ENCODE measurements at regions of chr14 and their contacts with region 1.

Region 1: DNA sequence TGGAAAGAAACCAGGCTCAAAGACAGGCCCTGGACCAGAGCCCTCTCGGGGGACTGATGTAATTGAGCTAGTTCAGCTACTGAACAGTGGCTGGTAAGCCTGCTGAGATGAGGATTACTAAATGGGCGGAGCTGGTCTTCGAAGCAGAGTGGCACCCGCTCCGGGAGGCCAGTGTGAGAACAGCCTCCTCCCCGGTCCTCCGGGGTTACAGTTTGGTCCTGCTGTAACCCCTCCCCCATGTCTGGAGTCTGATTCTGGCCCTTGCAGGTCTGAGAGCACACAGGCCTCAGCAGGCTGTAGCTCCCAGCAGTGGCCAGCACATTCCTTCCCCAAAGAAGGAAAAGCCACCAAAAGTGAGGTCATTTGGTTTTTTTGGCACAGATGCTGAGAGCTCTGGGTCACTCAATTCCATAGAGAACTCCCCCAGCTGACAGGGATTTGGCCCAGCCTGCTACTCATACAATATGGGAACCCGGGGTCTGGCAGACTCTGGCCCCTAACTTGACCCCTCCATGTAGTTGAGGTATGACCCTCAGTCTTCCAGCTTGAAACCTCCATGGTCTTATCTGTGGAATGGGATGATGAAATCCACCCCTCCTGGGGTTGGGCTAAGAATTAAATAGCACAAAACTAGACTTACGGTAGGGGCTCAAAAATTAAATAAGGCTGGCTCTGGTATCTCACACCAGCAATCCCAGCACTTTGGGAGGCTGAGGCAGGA is 39.0 kb downstream of the ACTN1 start:
- DNase-seq: peak; percentile 82 to 98
- ATAC-seq: peak; percentile 69 to 78
- H3K4me3 ChIP-seq: no peak overlapping the region
- H3K27ac ChIP-seq: peak overlapping the region; percentile 98 to 99
- H3K4me1 ChIP-seq: peaks cover 95% of the 10 kb centered on the region
- CTCF ChIP-seq: no peak
- EP300 ChIP-seq: peak; percentile 61 to 84; a peak in 3 of 5 replicates
- POLR2A ChIP-seq: no peak
- RAD21 ChIP-seq: peak; percentile 19 to 48; a peak in 4 of 5 replicates

Region 2: DNA sequence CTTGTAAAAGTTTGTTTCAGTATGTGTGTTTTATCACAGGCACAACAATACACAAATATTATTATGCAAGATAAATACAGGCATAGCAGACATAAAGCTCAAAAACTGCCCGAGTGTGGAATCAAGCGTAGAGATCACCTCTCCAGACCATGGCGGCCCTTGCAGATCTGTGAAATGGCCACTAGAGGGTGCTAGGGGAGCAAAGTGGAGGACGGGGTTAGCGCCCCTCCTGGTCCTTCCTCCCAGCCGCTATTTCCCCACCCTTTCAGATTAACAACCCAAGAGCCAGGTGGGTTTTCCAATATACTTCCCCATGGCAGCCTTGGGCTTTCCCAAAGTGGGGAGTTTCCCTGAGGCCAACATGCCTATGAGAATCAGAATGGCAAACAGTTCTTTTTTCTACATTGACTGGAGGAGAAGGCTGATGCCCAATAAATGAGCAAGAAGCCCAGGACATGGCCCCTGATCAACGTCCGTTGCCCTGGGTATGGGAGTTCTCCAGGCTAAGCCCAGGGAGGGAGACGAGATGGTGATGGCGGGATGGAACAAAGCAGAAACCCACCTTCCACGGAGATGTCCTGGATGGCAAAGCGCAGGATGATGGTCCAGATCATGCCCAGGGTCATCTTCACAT is 28.3 kb before region 1 on chr14:
- CTCF ChIA-PET with region 1: interaction called, 480 read pairs
- POLR2A ChIA-PET with region 1: no interaction called
- DNase-seq: peak; percentile 78 to 92
- ATAC-seq: peak; percentile 89 to 95
- H3K4me3 ChIP-seq: no peak overlapping the region
- H3K27ac ChIP-seq: peak overlapping the region; percentile 42 to 55; a peak in 4 of 6 replicates
- H3K4me1 ChIP-seq: peaks cover 31% of the 10 kb centered on the region
- CTCF ChIP-seq: peak; percentile 99
- EP300 ChIP-seq: no peak
- POLR2A ChIP-seq: no peak
- RAD21 ChIP-seq: peak; percentile 97 to 98

Region 3: DNA sequence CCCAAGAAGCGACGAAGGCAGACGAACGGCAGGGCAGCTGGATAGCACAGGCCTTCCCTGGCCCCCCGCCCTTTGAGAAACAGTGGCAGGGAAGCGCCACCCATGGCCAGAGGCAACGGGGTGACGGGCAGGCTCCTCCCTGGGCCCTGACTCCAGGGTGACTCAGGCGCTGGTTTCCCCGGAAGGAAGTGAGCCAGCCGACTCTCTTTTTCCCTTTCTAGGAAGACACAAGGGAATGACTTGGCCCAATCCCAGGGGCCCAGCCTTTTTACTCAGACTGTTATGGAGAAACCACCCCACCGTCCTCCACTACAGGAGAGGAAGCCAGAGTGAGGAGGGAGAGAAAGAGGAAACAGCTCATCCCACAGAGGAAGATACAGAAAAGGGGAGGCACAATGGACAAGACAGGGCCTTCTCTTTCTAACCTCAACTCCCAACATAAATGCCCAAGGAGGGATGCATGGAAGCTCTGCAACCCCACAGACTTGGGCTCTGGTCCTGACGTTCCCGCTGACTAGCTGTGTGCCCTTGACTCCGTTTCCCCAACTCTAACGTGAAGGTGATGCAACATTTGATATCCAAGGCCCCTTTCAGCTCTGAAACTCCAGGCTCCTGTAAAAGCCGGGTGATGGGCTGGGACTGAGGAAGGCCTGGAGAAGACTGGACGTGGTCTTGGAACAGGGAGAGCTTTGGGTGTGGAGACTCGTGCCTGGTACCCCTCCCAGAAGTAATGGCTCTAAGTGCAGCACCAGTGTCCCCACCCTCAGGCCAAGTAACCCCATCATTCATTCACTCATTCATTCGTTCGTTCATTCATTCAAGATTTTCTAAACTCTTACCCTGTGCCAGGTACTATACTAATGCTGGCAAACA is 11.2 kb after region 1 on chr14:
- CTCF ChIA-PET with region 1: interaction called, 480 read pairs
- POLR2A ChIA-PET with region 1: interaction called, 15 read pairs
- DNase-seq: peak; percentile 80 to 95
- ATAC-seq: peak; percentile 86 to 91
- H3K4me3 ChIP-seq: peak overlapping the region; percentile 18; the same call in 1 of the 3 replicates
- H3K27ac ChIP-seq: peak overlapping the region; percentile 98 to 99
- H3K4me1 ChIP-seq: peaks cover 100% of the 10 kb centered on the region
- CTCF ChIP-seq: no peak; the same call in 2 of the 3 replicates
- EP300 ChIP-seq: peak in 1 of 2 experiments; percentile 63; a peak in 3 of 5 replicates
- POLR2A ChIP-seq: no peak
- RAD21 ChIP-seq: peak in 1 of 2 experiments; percentile 42; a peak in 2 of 5 replicates

Region 4: DNA sequence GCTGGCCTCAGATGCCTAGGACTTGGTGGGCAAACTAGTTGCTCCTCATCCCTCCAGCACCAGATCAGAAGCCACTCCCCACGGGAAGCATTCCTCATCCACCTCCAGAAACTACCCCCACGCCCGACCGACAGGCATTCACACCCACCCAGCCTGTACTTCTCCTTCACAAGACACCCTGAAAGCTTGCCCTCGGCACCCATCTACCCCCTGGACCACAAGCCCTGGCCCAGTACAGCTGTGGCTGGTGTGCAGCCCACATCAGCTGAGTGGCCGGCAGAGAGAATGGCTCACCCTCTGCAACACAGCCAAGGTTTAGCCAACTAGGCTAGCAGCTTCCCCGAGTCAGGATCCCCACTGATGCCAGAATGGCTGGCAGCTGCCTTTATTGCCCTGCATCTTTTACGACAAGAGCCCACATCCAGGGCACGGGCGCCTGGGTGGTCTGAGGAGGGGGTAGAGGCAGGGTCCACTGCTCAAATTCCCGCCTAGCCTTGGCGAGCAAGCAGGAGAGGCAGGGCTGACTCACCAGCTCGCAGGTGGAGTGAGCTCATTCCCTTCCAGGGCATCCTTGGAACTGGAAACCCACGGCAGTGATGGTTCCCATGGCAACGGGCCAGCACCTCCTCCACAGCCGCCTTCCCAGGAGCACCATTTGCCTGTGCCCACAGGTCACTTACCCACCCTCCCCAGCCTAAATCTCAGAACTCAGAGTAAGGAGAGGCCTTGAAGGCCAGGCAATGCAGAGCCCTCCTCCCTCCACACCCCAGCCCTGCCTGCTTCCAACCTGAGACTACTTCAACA is 21.9 kb after region 1 on chr14:
- CTCF ChIA-PET with region 1: interaction called, 74 read pairs
- POLR2A ChIA-PET with region 1: no interaction called
- DNase-seq: peak in 1 of 2 experiments; percentile 70
- ATAC-seq: peak; percentile 48 to 54; a peak in 5 of 6 replicates
- H3K4me3 ChIP-seq: no peak overlapping the region
- H3K27ac ChIP-seq: peak overlapping the region in 1 of 2 experiments; percentile 46; a peak in 2 of 6 replicates
- H3K4me1 ChIP-seq: peaks cover 100% of the 10 kb centered on the region
- CTCF ChIP-seq: no peak
- EP300 ChIP-seq: no peak
- POLR2A ChIP-seq: no peak
- RAD21 ChIP-seq: no peak

Region 5: GRCh38 chr14:68979021-68979782 is 39.1 kb after region 1 on chr14 and contains the start of gene ACTN1:
- CTCF ChIA-PET with region 1: interaction called, 8 read pairs
- POLR2A ChIA-PET with region 1: interaction called, 12 read pairs
- DNase-seq: peak; percentile 96 to 97
- ATAC-seq: peak; percentile 84 to 91
- H3K4me3 ChIP-seq: peak within 1 kb of the TSS; percentile 98
- H3K27ac ChIP-seq: peak within 1 kb of the TSS; percentile 96 to 99
- H3K4me1 ChIP-seq: peaks cover 37% of the 10 kb centered on the region
- CTCF ChIP-seq: no peak
- EP300 ChIP-seq: no peak
- POLR2A ChIP-seq: peak; percentile 83
- RAD21 ChIP-seq: peak in 1 of 2 experiments; percentile 15; a peak in 2 of 5 replicates
- polyA plus RNA-seq, gene ACTN1: 207 and 208 TPM in 2 replicates

Region 6: GRCh38 chr14:69101331-69101826 is 161.3 kb after region 1 on chr14:
- CTCF ChIA-PET with region 1: interaction called, 10 read pairs
- POLR2A ChIA-PET with region 1: no interaction called
- DNase-seq: peak; percentile 45 to 76
- ATAC-seq: peak; percentile 97 to 98
- H3K4me3 ChIP-seq: no peak overlapping the region
- H3K27ac ChIP-seq: peak overlapping the region; percentile 65
- H3K4me1 ChIP-seq: peaks cover 18% of the 10 kb centered on the region
- CTCF ChIP-seq: peak; percentile 81
- EP300 ChIP-seq: no peak
- POLR2A ChIP-seq: no peak
- RAD21 ChIP-seq: peak; percentile 65 to 70; a peak in 4 of 5 replicates

Region 7: DNA sequence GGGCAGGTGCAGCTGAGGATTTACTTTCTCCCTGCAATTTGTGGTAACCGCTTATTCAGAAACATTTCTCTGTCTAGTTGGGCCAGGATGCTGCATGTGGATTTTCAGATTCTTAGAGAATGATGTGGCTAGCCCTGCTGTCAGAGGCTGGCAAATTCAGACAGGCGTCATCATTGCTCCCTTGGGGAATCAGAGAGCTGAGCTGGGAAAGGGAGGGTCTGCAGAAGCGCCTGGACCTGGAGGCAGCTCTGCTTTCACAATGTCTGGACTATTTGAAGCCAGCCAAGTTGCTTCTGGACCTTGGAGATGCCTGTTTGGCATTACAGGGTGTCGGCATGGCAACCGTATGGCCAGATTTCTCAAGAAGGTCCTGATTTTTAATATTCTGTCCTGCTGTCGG is 323.3 kb after region 1 on chr14:
- CTCF ChIA-PET with region 1: no interaction called
- POLR2A ChIA-PET with region 1: no interaction called
- DNase-seq: no peak
- ATAC-seq: no peak
- H3K4me3 ChIP-seq: no peak overlapping the region
- H3K27ac ChIP-seq: no peak overlapping the region
- H3K4me1 ChIP-seq: peaks cover 3% of the 10 kb centered on the region; the same call in 1 of the 3 replicates
- CTCF ChIP-seq: no peak
- EP300 ChIP-seq: no peak
- POLR2A ChIP-seq: no peak
- RAD21 ChIP-seq: no peak

Measured in A549 (cell line).